ENCODE measurements at regions of chr1 and their contacts with region 1.

Region 1: GRCh38 chr1:65687428-65688214 is 105.1 kb upstream of the PDE4B start:
- DNase-seq: peak; percentile 46
- CTCF ChIP-seq: peak; percentile 87

Region 2: GRCh38 chr1:65067491-65068201 is 620.0 kb before region 1 on chr1:
- in situ Hi-C with region 1: loop called (anchors 25 kb)
- DNase-seq: peak; percentile 67
- CTCF ChIP-seq: no peak

Region 3: GRCh38 chr1:65235867-65236805 is 451.5 kb before region 1 on chr1:
- in situ Hi-C with region 1: loop called (anchors 25 kb)
- DNase-seq: no peak
- CTCF ChIP-seq: peak; percentile 48

Region 4: DNA sequence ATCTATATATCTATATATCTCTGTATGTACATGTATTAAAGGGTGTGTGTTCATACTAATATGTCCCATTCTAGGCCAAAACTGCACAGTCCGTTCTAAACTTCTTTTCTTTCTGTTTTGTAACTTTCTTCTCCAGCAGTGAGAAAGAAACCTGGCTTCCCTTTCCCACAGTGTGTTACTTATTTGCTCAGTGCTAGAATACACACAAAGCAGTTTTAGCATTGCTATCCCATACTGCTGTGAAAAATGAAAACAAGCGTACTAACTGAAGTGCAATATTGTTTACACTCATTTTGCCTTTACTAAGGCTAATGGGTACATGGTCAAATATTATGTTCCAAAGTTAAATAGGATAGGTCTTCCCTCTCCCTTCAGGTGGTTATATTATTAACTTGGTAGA is 103.2 kb before region 1 on chr1:
- in situ Hi-C with region 1: no loop called
- DNase-seq: no peak
- CTCF ChIP-seq: no peak